Lower lobe of right lung (tissue), 2 donors: ENCODE measurements at regions of chr14 and their contacts with region 1.

Region 1: DNA sequence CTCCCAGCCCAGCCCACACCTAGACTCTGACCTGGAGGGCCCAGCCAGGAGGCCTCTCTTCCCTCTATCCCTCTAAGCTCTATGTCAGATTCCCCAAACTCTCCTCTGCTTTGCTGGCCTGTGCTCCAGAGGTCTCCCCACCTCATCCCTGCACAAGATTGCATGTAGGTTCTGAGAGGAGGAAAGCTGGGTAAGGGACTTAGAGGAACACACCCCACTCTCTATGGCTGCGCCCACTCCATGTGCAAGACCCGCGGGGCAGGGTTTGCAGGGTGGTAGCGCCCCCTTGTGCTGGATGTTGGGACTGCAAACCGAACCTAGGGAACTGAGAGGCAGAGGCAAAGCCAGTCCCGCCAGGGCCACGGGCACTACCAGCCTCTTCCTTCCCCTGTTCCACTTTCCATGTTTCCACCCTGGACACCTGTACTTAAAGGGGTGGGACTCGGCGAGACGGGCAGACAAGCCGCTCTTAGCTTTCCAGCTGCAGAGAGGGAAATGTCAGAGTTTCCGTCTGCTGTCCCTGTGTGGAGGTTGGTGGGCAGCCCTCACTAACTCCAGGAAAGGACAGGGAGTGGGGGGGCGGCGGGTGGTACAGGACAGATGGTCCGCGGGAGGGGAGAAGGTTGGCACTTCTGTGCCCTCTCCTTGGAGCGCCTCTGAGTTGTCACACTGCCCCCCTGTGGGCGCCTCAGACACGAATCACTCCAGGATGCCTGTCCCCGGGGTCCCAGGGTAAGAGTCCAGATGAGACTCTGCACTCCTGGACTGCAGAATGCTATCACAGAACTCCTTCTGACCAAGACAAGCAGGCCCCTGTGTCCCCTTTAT is 16.8 kb downstream of the MMP14 start:
- DNase-seq: peak; percentile 91
- ATAC-seq: peak; percentile 91
- H3K4me3 ChIP-seq: peak overlapping the region; percentile 49
- H3K27ac ChIP-seq: peak overlapping the region; percentile 27
- H3K4me1 ChIP-seq: peaks cover 47% of the 10 kb centered on the region
- H3K27me3 ChIP-seq: no peaks in the 10 kb centered on the region
- CTCF ChIP-seq: peak; percentile 94

Region 2: DNA sequence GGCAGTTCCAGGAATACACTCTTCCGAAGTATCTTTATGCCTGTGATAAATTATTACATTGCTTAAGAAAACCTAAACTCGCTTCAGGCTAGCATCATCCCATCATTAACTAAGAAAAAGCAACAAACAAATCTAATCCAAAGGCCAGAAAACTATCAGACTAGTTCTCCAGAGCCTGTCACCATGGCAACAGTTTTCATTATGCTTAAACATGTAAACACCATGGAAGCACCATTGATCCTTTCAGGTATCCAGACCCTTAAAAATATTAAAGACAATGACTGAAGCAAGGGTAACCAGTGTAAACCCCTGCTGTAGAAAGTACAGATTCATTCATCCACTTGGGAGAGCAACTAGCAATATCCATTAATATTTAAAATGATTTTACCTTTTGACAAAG is 273.9 kb before region 1 on chr14:
- intact Hi-C with region 1: loop called (anchors 5 kb)
- DNase-seq: no peak
- ATAC-seq: no peak
- H3K4me3 ChIP-seq: no peak overlapping the region
- H3K27ac ChIP-seq: no peak overlapping the region
- H3K4me1 ChIP-seq: peaks cover 15% of the 10 kb centered on the region
- H3K27me3 ChIP-seq: no peaks in the 10 kb centered on the region
- CTCF ChIP-seq: no peak

Region 3: DNA sequence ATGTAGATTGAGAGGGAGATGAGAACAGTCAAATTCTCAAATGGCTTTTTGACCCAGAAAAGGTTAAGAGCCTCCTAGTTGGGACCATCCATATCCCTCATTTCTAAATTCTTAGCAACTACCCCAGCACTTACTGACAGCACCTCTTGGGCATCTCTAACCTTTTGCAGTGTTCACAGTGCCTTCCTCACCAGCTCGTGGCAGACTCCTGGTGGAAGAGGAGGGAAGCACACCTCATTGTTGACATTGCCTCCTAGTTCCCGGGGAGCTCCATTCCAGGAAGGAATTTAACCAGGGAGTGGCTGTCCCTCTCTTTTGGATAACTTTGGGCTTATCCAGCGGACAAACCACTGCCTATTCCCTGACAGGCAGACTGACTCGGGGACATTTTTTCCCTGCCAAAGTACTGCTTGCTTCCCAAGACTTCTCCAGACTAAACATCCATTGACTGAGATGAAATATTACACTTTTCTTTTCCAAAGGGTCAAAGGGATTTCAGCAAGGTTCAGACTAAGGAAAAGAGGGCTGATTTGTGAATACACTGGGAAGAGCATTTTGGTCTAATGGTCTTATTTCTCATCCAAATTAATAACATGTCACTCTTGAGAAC is 200.0 kb before region 1 on chr14:
- intact Hi-C with region 1: loop called (anchors 10 kb)
- DNase-seq: peak; percentile 55
- ATAC-seq: peak; percentile 88 to 93
- H3K4me3 ChIP-seq: no peak overlapping the region
- H3K27ac ChIP-seq: no peak overlapping the region
- H3K4me1 ChIP-seq: no peaks in the 10 kb centered on the region
- H3K27me3 ChIP-seq: no peaks in the 10 kb centered on the region
- CTCF ChIP-seq: peak; percentile 85

Region 4: GRCh38 chr14:22939684-22940083 is 86.5 kb after region 1 on chr14:
- intact Hi-C with region 1: no loop called
- DNase-seq: no peak
- ATAC-seq: no peak
- H3K4me3 ChIP-seq: no peak overlapping the region
- H3K27ac ChIP-seq: no peak overlapping the region
- H3K4me1 ChIP-seq: no peaks in the 10 kb centered on the region
- H3K27me3 ChIP-seq: no peaks in the 10 kb centered on the region
- CTCF ChIP-seq: no peak